ENCODE measurements at regions of chr2 and their contacts with region 1.

Region 1: DNA sequence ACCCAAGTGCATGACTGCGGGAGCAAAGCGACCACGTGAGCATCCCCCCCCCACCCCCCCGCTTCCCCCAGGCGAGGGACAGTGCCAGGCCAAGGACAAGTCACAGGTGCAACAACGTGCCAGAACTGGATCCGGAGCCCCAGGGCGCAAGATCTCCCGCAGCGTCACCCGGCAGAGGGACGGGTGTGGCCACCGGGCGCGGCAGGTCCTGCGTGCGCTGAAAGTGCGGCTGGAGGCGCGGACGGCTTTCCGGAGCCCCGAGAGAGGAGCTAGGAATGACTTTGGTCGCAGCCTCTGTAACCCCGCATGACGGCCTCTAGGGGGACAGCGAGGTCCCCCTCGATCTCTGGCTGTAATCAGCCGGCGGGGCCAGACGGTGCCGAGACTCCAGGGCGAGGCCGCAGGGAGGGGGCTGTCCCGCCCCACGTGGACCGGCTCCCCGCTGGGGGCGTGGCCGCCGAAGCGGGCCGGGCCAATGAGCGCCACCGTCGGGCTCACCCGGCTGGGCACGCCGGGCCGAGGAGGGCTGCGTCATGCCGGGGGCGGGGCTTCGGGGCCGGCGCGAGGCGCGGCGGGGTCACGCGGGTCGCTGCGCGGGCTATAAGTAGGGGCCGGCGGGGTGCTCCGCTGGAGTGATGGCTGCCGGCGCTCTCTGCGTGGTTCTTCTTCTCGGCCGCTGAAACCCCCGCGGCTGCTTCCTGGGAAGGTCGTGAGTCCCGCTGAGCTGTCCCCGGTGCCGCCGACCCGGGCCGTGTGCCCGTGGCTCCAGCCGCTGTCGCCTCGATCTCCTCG is at the start of gene SLC20A1:
- DNase-seq: peak; percentile 88
- ATAC-seq: peak; percentile 92
- H3K4me3 ChIP-seq: peak within 1 kb of the TSS; percentile 91
- H3K27ac ChIP-seq: peak within 1 kb of the TSS; percentile 93
- H3K4me1 ChIP-seq: peaks cover 15% of the 10 kb centered on the region
- H3K27me3 ChIP-seq: no peaks in the 10 kb centered on the region
- CTCF ChIP-seq: peak; percentile 33; the same call in 1 of the 2 replicates
- POLR2A ChIP-seq: peak; percentile 99
- RAD21 ChIP-seq: peak; percentile 23
- total RNA-seq, gene SLC20A1: 94.1 and 123 TPM in 2 replicates

Region 2: GRCh38 chr2:112626604-112627059 is 18.9 kb before region 1 on chr2:
- CTCF ChIA-PET with region 1: interaction called, 9 read pairs
- POLR2A ChIA-PET with region 1: interaction called, 13 read pairs
- dilution Hi-C with region 1: no loop called
- in situ Hi-C with region 1: no loop called
- intact Hi-C with region 1: loop called (anchors 1 kb)
- DNase-seq: peak; percentile 68
- ATAC-seq: peak; percentile 54
- H3K4me3 ChIP-seq: no peak overlapping the region; the same call in 1 of the 2 replicates
- H3K27ac ChIP-seq: peak overlapping the region; percentile 79
- H3K4me1 ChIP-seq: peaks cover 29% of the 10 kb centered on the region
- H3K27me3 ChIP-seq: no peaks in the 10 kb centered on the region
- CTCF ChIP-seq: peak; percentile 79
- POLR2A ChIP-seq: no peak; the same call in 1 of the 2 replicates
- RAD21 ChIP-seq: peak; percentile 86

Region 3: GRCh38 chr2:112706170-112706664 is 60.7 kb after region 1 on chr2:
- CTCF ChIA-PET with region 1: no interaction called
- POLR2A ChIA-PET with region 1: interaction called, 11 read pairs
- dilution Hi-C with region 1: no loop called
- in situ Hi-C with region 1: no loop called
- intact Hi-C with region 1: no loop called
- DNase-seq: peak; percentile 79
- ATAC-seq: peak; percentile 60; the same call in 1 of the 2 replicates
- H3K4me3 ChIP-seq: no peak overlapping the region
- H3K27ac ChIP-seq: no peak overlapping the region
- H3K4me1 ChIP-seq: 0 out of 2 replicates have a peak, but pooled peaks cover 4% of the 10 kb centered on the region
- H3K27me3 ChIP-seq: peaks cover 3% of the 10 kb centered on the region; the same call in 1 of the 2 replicates
- CTCF ChIP-seq: no peak
- POLR2A ChIP-seq: no peak
- RAD21 ChIP-seq: no peak